Natural killer cell (primary cell): ENCODE measurements at regions of chr7 and their contacts with region 1.

Region 1: GRCh38 chr7:92447345-92448204 is at the start of gene GATAD1:
- DNase-seq: peak; percentile 80 to 91
- ATAC-seq: peak; percentile 84 to 94 (median 89)
- H3K4me3 ChIP-seq: peak within 1 kb of the TSS; percentile 92
- H3K4me3 Mint-ChIP-seq: peak within 1 kb of the TSS; percentile 93
- H3K27ac ChIP-seq: peak within 1 kb of the TSS; percentile 97
- H3K27ac Mint-ChIP-seq: peak within 1 kb of the TSS; percentile 90 to 98
- H3K4me1 ChIP-seq: peaks cover 6% of the 10 kb centered on the region
- H3K4me1 Mint-ChIP-seq: peaks cover 6 to 9% of the 10 kb centered on the region in 2 donors
- H3K27me3 ChIP-seq: no peaks in the 10 kb centered on the region
- H3K27me3 Mint-ChIP-seq: no peaks in the 10 kb centered on the region
- CTCF ChIP-seq: peak; percentile 29
- total RNA-seq, gene GATAD1: 32.5 to 43.3 (median 35.0) TPM

Region 2: GRCh38 chr7:91835846-91836368 is 611.7 kb before region 1 on chr7:
- intact Hi-C with region 1: loop called (anchors 10 kb)
- DNase-seq: no peak
- ATAC-seq: no peak
- H3K4me3 ChIP-seq: no peak overlapping the region
- H3K4me3 Mint-ChIP-seq: no peak overlapping the region
- H3K27ac ChIP-seq: no peak overlapping the region
- H3K27ac Mint-ChIP-seq: no peak overlapping the region
- H3K4me1 ChIP-seq: no peaks in the 10 kb centered on the region
- H3K4me1 Mint-ChIP-seq: no peaks in the 10 kb centered on the region
- H3K27me3 ChIP-seq: no peaks in the 10 kb centered on the region
- H3K27me3 Mint-ChIP-seq: no peaks in the 10 kb centered on the region
- CTCF ChIP-seq: no peak

Region 3: GRCh38 chr7:91940572-91941341 is 506.8 kb before region 1 on chr7 and contains the start of gene AKAP9:
- intact Hi-C with region 1: loop called (anchors 5 kb)
- DNase-seq: peak; percentile 82 to 91
- ATAC-seq: peak; percentile 88 to 92 (median 92)
- H3K4me3 ChIP-seq: peak within 1 kb of the TSS; percentile 95
- H3K4me3 Mint-ChIP-seq: peak within 1 kb of the TSS; percentile 96
- H3K27ac ChIP-seq: peak within 1 kb of the TSS; percentile 98
- H3K27ac Mint-ChIP-seq: peak within 1 kb of the TSS; percentile 91 to 96
- H3K4me1 ChIP-seq: peaks cover 10% of the 10 kb centered on the region
- H3K4me1 Mint-ChIP-seq: peaks cover 29 to 35% of the 10 kb centered on the region in 2 donors
- H3K27me3 ChIP-seq: no peaks in the 10 kb centered on the region
- H3K27me3 Mint-ChIP-seq: peaks cover 8 to 9% of the 10 kb centered on the region in 2 donors
- CTCF ChIP-seq: no peak
- total RNA-seq, gene AKAP9: 78.8 to 93.0 (median 81.9) TPM

Region 4: GRCh38 chr7:92178927-92179924 is 268.3 kb before region 1 on chr7 and contains the start of gene LRRD1:
- intact Hi-C with region 1: loop called (anchors 2 kb)
- DNase-seq: peak; percentile 85 to 87
- ATAC-seq: peak; percentile 99 to 100 (median 99)
- H3K4me3 ChIP-seq: peak within 1 kb of the TSS; percentile 41
- H3K4me3 Mint-ChIP-seq: peak within 1 kb of the TSS; percentile 86
- H3K27ac ChIP-seq: no peak within 1 kb of the TSS
- H3K27ac Mint-ChIP-seq: peak within 1 kb of the TSS in 1 of 2 donors; percentile 72
- H3K4me1 ChIP-seq: peaks cover 7% of the 10 kb centered on the region
- H3K4me1 Mint-ChIP-seq: peaks cover 8 to 12% of the 10 kb centered on the region in 2 donors
- H3K27me3 ChIP-seq: peaks cover 4% of the 10 kb centered on the region
- H3K27me3 Mint-ChIP-seq: peaks cover 3 to 6% of the 10 kb centered on the region in 2 donors
- CTCF ChIP-seq: peak; percentile 99
- total RNA-seq, gene LRRD1: not detected

Region 5: GRCh38 chr7:92404170-92404614 is 43.4 kb before region 1 on chr7:
- intact Hi-C with region 1: no loop called
- DNase-seq: peak; percentile 31 to 48
- ATAC-seq: peak; percentile 70 to 91 (median 79)
- H3K4me3 ChIP-seq: no peak overlapping the region
- H3K4me3 Mint-ChIP-seq: peak overlapping the region; percentile 72
- H3K27ac ChIP-seq: no peak overlapping the region
- H3K27ac Mint-ChIP-seq: peak overlapping the region; percentile 62 to 74
- H3K4me1 ChIP-seq: peaks cover 12% of the 10 kb centered on the region
- H3K4me1 Mint-ChIP-seq: peaks cover 19 to 23% of the 10 kb centered on the region in 2 donors
- H3K27me3 ChIP-seq: no peaks in the 10 kb centered on the region
- H3K27me3 Mint-ChIP-seq: no peaks in the 10 kb centered on the region
- CTCF ChIP-seq: no peak

Region 6: DNA sequence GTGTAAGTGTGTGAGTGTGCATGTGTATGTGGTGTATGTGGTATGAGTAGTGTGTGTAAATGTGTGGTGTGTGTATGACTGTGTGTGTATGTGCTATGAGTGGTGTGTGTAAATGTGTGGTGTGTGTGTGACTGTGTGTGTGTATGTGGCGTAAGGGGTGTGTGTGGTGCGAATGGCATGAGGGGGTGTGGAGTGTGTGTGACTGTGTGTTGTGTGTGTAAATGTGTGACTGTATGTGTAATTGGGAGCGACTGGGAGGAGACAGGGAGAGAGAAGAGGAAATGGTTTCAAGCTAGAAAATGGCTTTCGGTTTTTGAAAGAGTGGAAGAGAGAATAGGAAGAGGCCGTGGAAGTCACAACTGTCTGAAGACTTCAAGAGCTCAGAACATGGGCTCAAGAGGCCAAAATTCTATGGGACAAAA is 23.9 kb before region 1 on chr7:
- intact Hi-C with region 1: loop called (anchors 1 kb)
- DNase-seq: no peak
- ATAC-seq: no peak
- H3K4me3 ChIP-seq: no peak overlapping the region
- H3K4me3 Mint-ChIP-seq: no peak overlapping the region
- H3K27ac ChIP-seq: no peak overlapping the region
- H3K27ac Mint-ChIP-seq: peak overlapping the region in 1 of 2 donors; percentile 0
- H3K4me1 ChIP-seq: peaks cover 5% of the 10 kb centered on the region
- H3K4me1 Mint-ChIP-seq: peaks cover 6 to 9% of the 10 kb centered on the region in 2 donors
- H3K27me3 ChIP-seq: no peaks in the 10 kb centered on the region
- H3K27me3 Mint-ChIP-seq: peaks cover 9 to 17% of the 10 kb centered on the region in 2 donors
- CTCF ChIP-seq: no peak

Region 7: GRCh38 chr7:92768501-92769393 is 321.2 kb after region 1 on chr7:
- intact Hi-C with region 1: no loop called
- DNase-seq: no peak
- ATAC-seq: no peak
- H3K4me3 ChIP-seq: no peak overlapping the region
- H3K4me3 Mint-ChIP-seq: no peak overlapping the region
- H3K27ac ChIP-seq: no peak overlapping the region
- H3K27ac Mint-ChIP-seq: no peak overlapping the region
- H3K4me1 ChIP-seq: peaks cover 2% of the 10 kb centered on the region
- H3K4me1 Mint-ChIP-seq: peaks cover 39 to 40% of the 10 kb centered on the region in 2 donors
- H3K27me3 ChIP-seq: no peaks in the 10 kb centered on the region
- H3K27me3 Mint-ChIP-seq: no peaks in the 10 kb centered on the region
- CTCF ChIP-seq: no peak

Region 8: DNA sequence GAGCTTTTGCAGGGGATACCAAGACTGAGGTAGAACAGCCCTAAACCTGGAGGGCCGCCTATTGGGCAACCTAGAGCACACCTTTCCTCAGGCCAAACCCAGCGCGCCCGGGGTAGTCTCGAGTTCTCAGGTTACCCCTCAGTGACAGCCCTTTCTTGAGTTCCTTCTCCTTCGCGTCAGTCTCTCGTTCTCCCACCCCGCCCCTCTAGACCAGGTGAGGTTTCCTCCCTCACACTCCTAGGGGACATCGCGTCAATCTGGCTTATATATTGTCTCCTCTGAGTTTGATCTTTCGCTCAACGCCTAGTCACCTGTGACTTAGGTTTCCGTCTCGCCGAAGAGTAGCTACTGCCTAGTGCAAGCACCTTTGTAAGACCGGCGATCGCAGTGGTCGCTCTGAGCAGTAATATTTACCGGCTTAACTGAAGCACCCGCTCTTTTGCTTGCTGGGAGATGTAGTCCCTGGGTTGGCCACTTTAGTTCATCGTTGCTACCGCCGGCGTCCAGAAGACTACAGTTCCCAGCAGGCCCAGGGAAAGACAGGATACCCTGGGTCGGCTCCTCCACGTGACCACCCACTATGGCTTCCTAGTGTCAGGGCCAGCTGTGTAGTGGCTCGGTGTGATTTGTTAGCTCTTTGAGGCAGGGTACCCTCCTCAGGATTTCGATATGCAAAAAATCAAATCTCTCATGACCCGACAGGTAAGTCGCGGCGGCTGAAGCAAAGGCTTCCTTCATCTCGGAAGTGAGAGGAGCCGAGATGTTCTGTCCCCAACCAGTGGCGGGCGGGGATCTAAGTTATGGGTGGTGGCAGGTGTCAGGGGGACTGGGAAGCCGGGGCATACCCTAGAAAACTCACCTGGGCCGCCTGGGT is 784.5 kb after region 1 on chr7 and contains the start of gene VPS50:
- intact Hi-C with region 1: loop called (anchors 2 kb)
- DNase-seq: peak; percentile 85 to 97
- ATAC-seq: peak; percentile 98 to 100 (median 99)
- H3K4me3 ChIP-seq: peak within 1 kb of the TSS; percentile 73
- H3K4me3 Mint-ChIP-seq: peak within 1 kb of the TSS; percentile 98
- H3K27ac ChIP-seq: peak within 1 kb of the TSS; percentile 77
- H3K27ac Mint-ChIP-seq: peak within 1 kb of the TSS; percentile 93 to 95
- H3K4me1 ChIP-seq: peaks cover 4% of the 10 kb centered on the region
- H3K4me1 Mint-ChIP-seq: peaks cover 15 to 18% of the 10 kb centered on the region in 2 donors
- H3K27me3 ChIP-seq: no peaks in the 10 kb centered on the region
- H3K27me3 Mint-ChIP-seq: peaks cover 0 to 6% of the 10 kb centered on the region in 2 donors
- CTCF ChIP-seq: no peak
- total RNA-seq, gene VPS50: 29.0 to 32.8 (median 31.7) TPM